Kidney (tissue), 22 donors: ENCODE measurements at regions of chr11 and their contacts with region 1.

Region 1: DNA sequence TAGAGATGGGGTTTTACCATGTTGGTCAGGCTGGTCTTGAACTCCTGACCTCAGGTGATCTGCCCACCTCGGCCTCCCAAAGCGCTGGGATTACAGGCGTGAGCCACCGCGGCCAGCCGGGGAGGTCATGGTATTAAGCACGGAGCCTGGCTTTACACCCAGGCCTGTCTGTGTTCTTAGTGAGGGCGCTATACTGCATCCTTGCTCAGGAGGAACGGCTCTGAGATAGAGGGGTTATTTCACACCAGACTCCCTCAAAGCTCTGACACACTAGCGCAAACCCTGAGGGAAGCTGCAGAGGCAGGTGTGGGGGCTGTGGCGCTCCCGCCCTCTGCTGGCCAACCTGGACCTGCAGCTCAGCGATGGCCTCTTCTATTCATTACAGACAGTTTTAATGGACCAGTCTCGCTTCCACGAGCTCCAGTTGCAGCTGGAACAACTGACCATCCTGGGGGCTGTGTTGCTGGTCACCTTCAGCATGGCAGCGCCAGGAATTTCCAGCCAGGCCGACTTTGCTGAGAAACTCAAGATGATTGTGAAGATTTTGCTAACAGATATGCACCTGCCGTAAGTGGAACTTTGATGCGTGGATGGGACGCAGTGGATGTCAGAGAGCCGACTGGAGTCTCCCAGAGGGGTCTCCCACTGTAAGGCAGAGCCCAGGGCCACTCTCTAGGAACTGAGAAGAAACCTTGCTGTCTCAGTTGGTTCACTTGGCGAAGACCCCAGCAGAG is 26.2 kb downstream of the TCP11L1 start:
- DNase-seq: peak; percentile 79 to 83 (median 83)
- H3K4me3 ChIP-seq: no peak overlapping the region
- H3K27ac ChIP-seq: no peak overlapping the region
- H3K4me1 ChIP-seq: no peaks in the 10 kb centered on the region
- H3K27me3 ChIP-seq: no peaks in the 10 kb centered on the region
- CTCF ChIP-seq: peak; percentile 83

Region 2: DNA sequence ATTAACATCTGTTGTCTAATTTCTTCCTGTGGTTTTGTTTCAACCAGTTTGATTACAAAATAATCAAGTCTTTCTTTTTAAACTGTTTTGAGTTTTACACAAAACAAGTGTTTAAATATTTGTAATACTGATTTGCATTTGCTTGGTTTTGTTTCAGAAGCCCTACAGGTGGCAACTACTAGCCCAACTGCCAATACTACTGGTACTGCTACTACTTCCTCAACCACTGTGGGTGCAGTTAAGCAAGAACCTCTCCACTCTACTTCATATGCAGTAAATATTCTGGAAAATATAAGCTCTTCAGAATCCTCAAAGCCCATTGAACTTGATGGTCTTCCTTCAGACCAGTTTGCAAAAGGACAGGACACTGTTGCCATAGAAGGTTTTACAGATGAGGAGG is 111.9 kb before region 1 on chr11:
- intact Hi-C with region 1: loop called (anchors 10 kb)
- DNase-seq: no peak
- H3K4me3 ChIP-seq: no peak overlapping the region
- H3K27ac ChIP-seq: no peak overlapping the region
- H3K4me1 ChIP-seq: no peaks in the 10 kb centered on the region
- H3K27me3 ChIP-seq: no peaks in the 10 kb centered on the region
- CTCF ChIP-seq: no peak